ENCODE measurements at regions of chr18 and their contacts with region 1.

Region 1: GRCh38 chr18:47748847-47749599 is 181.4 kb downstream of the SMAD2 start:
- H3K4me3 Mint-ChIP-seq: peak overlapping the region; percentile 37
- H3K27ac Mint-ChIP-seq: no peak overlapping the region
- H3K4me1 Mint-ChIP-seq: peaks cover 8% of the 10 kb centered on the region
- H3K27me3 Mint-ChIP-seq: peaks cover 30% of the 10 kb centered on the region

Region 2: DNA sequence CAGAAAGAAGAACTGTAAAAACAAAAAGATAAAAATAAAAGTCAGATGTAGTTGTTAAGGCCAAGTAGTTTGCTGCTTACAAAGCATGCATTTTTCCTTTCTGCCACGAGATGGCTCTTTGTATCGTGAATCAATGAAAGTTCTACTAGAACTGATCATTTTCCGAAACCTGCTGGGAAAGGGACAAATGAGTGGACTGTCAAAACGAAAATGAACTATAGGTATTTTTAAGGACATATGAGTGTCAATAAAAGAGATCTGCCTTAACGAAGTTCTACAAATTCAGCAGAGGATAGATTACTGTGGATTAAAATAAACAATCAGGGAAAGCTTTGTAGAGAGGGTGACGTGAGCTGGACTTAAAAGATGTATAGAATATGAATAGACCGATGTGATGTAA is 698.6 kb before region 1 on chr18:
- intact Hi-C with region 1: loop called (anchors 2 kb)
- H3K4me3 Mint-ChIP-seq: no peak overlapping the region
- H3K27ac Mint-ChIP-seq: no peak overlapping the region
- H3K4me1 Mint-ChIP-seq: no peaks in the 10 kb centered on the region
- H3K27me3 Mint-ChIP-seq: peaks cover 3% of the 10 kb centered on the region